ENCODE measurements at regions of chr2 and their contacts with region 1.

Region 1: GRCh38 chr2:148658807-148659722 is 14.5 kb downstream of the EPC2 start:
- DNase-seq: peak in 2 of 9 experiments; percentile 58 to 75
- ATAC-seq: peak; percentile 81
- H3K4me3 ChIP-seq: no peak overlapping the region
- H3K4me3 Mint-ChIP-seq: peak overlapping the region; percentile 66
- H3K27ac ChIP-seq: peak overlapping the region in 1 of 2 experiments; percentile 56
- H3K27ac Mint-ChIP-seq: peak overlapping the region; percentile 85
- H3K4me1 ChIP-seq: peaks cover 68% of the 10 kb centered on the region
- H3K4me1 Mint-ChIP-seq: peaks cover 78% of the 10 kb centered on the region
- H3K27me3 ChIP-seq: no peaks in the 10 kb centered on the region
- H3K27me3 Mint-ChIP-seq: no peaks in the 10 kb centered on the region
- CTCF ChIP-seq: no peak

Region 2: DNA sequence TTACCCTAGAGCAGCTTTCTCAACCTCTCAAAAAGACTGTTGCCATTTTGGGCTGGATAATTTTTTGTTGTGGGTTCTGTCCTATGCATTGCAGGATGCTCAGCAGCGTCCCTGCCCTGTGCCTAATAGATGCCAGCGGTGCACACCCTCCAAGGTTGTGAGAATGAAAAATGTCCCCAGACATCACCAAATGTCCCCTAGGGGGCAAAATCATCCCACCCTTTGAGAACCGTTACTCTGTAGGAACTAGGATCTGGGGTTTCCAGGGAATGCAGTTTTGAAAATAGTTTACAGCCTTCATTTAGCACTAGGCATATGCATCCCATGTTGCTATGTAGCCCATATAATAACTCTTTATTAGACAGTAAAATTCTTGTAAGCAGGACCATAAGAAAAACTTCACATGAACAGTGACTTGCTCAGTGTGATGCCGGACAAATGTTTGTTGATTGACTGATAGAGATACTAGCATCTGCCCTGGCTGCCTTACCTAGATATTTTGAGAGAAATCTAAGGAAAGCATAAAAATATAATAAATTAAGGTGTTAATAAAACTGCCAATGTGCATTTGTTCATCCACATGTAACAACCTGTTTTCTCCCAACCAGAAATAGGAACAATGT is 93.7 kb before region 1 on chr2:
- CTCF ChIA-PET with region 1: no interaction called
- POLR2A ChIA-PET with region 1: no interaction called
- intact Hi-C with region 1: loop called in 1 of 2 experiments (anchors 5 kb)
- DNase-seq: no peak
- ATAC-seq: no peak
- H3K4me3 ChIP-seq: no peak overlapping the region
- H3K4me3 Mint-ChIP-seq: no peak overlapping the region
- H3K27ac ChIP-seq: no peak overlapping the region
- H3K27ac Mint-ChIP-seq: no peak overlapping the region
- H3K4me1 ChIP-seq: peaks cover 8% of the 10 kb centered on the region
- H3K4me1 Mint-ChIP-seq: peaks cover 14% of the 10 kb centered on the region
- H3K27me3 ChIP-seq: no peaks in the 10 kb centered on the region
- H3K27me3 Mint-ChIP-seq: no peaks in the 10 kb centered on the region
- CTCF ChIP-seq: no peak

Region 3: GRCh38 chr2:148674063-148675020 is 15.3 kb after region 1 on chr2:
- CTCF ChIA-PET with region 1: interaction called, 3 read pairs
- POLR2A ChIA-PET with region 1: interaction called, 4 read pairs
- intact Hi-C with region 1: loop called in 1 of 2 experiments (anchors 2 kb)
- DNase-seq: peak in 4 of 9 experiments; percentile 4 to 67 (median 40)
- ATAC-seq: peak; percentile 93
- H3K4me3 ChIP-seq: no peak overlapping the region
- H3K4me3 Mint-ChIP-seq: peak overlapping the region; percentile 23
- H3K27ac ChIP-seq: no peak overlapping the region
- H3K27ac Mint-ChIP-seq: peak overlapping the region; percentile 45
- H3K4me1 ChIP-seq: peaks cover 32% of the 10 kb centered on the region
- H3K4me1 Mint-ChIP-seq: peaks cover 78% of the 10 kb centered on the region
- H3K27me3 ChIP-seq: no peaks in the 10 kb centered on the region
- H3K27me3 Mint-ChIP-seq: no peaks in the 10 kb centered on the region
- CTCF ChIP-seq: peak; percentile 78